ENCODE measurements at regions of chr2 and their contacts with region 1.

Region 1: DNA sequence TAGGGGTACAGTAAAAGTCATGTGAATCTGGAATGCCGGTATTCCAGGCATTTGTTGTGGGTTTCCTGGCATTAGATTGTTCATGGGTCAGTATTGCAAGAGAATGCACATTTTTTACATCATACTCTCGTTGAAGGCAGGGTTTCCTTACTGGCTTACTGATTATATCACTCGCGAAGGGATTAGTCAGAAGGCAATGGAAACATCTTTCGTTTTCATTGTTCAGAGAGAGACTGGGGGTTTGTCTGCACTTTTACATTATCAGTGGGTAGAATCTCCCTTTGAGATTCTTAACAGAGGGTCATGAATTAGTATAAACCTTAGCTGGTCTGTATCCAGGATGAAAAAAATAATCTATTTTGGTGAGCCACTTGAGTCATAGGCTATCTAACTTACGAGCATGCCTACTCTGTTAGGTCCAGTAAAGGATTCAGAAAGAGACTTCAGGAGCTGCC is 229.3 kb upstream of the EPAS1 start:
- DNase-seq: no peak

Region 2: DNA sequence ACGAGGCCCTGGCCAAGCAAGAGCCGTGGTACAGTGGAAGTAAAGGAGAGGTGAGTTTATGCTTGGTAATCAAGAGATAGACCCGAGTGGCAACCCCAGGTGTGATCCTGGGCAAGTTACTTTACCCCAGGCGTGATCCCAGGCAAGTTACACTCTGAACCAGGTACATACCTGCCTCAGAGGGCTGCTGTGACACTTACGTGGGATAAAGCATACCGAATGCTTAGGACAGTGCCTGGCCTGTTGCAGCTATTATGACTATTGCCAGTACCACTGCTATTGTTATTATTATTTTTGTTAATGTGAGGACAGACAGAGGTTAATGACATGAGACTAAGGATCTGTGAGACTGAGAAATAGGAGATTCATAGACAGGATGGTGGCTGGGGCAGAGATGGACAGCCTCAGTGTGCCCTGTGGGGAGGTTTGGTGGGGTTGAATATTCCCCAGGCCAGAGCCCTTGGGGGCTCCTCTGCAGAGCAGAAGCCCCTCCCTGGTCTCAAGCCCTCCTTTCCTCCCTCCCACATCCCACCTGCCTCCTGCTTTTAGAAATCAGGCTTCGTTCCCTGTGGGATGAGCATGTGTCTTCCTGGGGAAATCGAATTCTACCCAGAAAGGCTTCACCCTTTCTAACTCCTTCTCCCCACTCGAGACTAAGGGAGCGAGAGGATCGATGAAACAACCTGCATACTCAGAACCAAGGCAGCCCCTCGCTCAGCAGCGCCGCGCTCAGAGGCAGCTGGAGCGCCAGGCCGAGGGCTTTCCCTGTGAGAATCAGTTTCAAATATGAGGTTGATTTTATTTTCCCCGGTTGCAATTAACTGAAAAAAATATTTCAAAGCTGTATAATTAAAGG is 1188.4 kb before region 1 on chr2:
- intact Hi-C with region 1: loop called in 1 of 2 experiments (anchors 5 kb)
- DNase-seq: no peak